ENCODE measurements at regions of chr10 and their contacts with region 1.

Region 1: DNA sequence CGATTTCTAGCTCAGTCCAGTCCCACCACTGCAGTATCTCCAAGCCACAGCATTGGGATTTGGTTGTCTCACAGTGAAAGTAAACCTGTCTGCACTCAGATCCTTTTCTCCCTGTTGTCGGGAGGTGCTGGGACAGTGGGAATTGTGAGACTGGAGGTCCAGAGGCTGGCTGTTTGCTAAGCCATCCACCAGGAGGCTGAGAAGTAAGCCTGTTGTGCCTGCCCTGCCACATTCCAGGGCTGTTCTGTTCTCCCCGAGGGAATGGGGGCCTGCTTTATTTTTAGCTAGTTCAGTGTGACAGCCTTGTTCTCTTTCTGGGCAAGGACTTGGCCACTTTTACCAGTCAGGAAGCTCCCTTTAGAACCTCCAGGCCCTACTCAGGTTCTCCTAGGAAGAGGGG is 54.9 kb downstream of the HK1 start:
- DNase-seq: peak; percentile 82
- H3K4me3 Mint-ChIP-seq: peak overlapping the region; percentile 50
- H3K27ac Mint-ChIP-seq: peak overlapping the region; percentile 13
- H3K4me1 Mint-ChIP-seq: peaks cover 49% of the 10 kb centered on the region
- H3K27me3 Mint-ChIP-seq: no peaks in the 10 kb centered on the region
- CTCF ChIP-seq: peak; percentile 63

Region 2: DNA sequence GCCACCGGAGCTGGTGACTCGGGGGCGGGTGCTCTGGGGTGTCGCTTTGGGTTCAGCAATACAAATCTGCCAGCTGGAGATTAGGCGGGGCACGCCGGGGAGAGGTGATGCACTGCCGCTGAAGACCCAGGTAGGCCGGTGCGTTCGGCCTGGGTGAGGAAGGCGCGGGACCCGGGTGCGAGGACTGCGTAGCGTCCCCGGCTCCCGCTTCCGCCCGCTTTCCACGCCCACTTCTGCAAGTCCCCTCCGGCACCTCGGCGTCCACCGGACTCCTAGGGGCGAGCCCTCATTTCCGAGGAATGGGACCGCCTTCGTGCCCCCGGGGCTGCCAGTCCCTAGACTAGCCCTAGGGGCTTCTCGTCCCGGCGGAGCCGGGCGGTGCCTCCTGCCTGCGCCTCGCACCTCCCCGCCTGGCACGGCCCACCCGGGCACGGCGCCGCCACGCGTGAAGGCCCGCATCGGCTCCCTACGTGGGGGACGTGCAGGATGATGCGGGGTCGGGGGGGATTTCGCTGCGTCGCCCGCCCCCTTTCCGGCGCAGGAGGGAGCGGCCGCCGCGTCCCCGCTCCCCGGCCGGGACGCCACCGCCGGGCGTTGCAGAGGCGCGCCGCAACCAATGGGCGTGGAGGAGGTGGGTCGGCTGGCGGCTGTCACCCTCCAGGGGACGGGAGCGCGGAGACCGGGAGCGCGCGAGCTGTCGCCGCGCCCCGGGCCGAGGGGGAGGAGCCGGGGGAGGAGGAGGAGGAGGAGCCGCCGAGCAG is 14.9 kb before region 1 on chr10:
- CTCF ChIA-PET with region 1: interaction called, 17 read pairs
- intact Hi-C with region 1: no loop called
- DNase-seq: peak; percentile 98
- H3K4me3 Mint-ChIP-seq: peak overlapping the region; percentile 99
- H3K27ac Mint-ChIP-seq: peak overlapping the region; percentile 81
- H3K4me1 Mint-ChIP-seq: peaks cover 30% of the 10 kb centered on the region
- H3K27me3 Mint-ChIP-seq: no peaks in the 10 kb centered on the region
- CTCF ChIP-seq: no peak

Region 3: GRCh38 chr10:69360485-69361324 is 27.5 kb after region 1 on chr10:
- CTCF ChIA-PET with region 1: interaction called, 17 read pairs
- intact Hi-C with region 1: loop called (anchors 2 kb)
- DNase-seq: peak; percentile 85
- H3K4me3 Mint-ChIP-seq: peak overlapping the region; percentile 13
- H3K27ac Mint-ChIP-seq: peak overlapping the region; percentile 50
- H3K4me1 Mint-ChIP-seq: peaks cover 51% of the 10 kb centered on the region
- H3K27me3 Mint-ChIP-seq: no peaks in the 10 kb centered on the region
- CTCF ChIP-seq: no peak

Region 4: DNA sequence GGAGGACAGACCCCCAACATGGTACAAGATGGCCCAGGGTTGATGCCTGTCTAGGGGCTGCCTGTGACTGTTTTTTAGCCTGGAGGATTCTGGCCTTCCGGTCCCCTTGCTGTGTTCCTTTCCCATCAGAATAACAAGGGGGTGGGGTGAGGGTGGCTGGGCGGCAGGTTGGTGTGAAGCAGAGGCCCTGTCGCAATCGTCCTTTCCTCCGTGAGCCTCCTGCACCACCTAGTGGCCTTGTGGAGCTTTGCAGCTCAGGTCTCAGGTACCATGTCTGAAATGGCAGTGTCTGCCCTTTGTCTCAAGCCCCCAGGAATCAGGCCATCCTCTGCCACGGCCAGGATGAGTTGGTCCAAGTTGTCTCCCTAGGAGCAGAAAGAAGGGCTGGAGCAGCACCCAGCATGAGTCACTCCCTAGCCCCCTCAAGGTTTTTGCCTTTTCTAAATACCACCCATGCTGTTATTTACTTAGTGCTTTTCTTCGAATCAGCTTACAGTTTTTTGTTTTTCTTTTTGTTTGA is 59.3 kb after region 1 on chr10:
- CTCF ChIA-PET with region 1: interaction called, 8 read pairs
- intact Hi-C with region 1: loop called (anchors 1 kb)
- DNase-seq: peak; percentile 90
- H3K4me3 Mint-ChIP-seq: no peak overlapping the region
- H3K27ac Mint-ChIP-seq: no peak overlapping the region
- H3K4me1 Mint-ChIP-seq: peaks cover 16% of the 10 kb centered on the region
- H3K27me3 Mint-ChIP-seq: no peaks in the 10 kb centered on the region
- CTCF ChIP-seq: peak; percentile 97